SK-N-SH (cell line): ENCODE measurements at regions of chr17 and their contacts with region 1.

Region 1: GRCh38 chr17:81101614-81102306 is 63.5 kb upstream of the PVALEF start:
- DNase-seq: peak; percentile 100
- H3K4me3 ChIP-seq: peak overlapping the region in 1 of 2 experiments; percentile 24; a peak in 1 of 4 replicates
- H3K27ac ChIP-seq: no peak overlapping the region
- H3K4me1 ChIP-seq: peaks cover 11 to 13% of the 10 kb centered on the region in 2 experiments; a peak in 3 of 4 replicates
- H3K27me3 ChIP-seq: no peaks in the 10 kb centered on the region
- CTCF ChIP-seq: peak; percentile 100
- EP300 ChIP-seq: no peak
- RAD21 ChIP-seq: peak; percentile 97

Region 2: GRCh38 chr17:81002409-81003361 is 99.1 kb before region 1 on chr17:
- CTCF ChIA-PET with region 1: interaction called, 45 read pairs
- POLR2A ChIA-PET with region 1: no interaction called
- DNase-seq: peak; percentile 92
- H3K4me3 ChIP-seq: no peak overlapping the region
- H3K27ac ChIP-seq: no peak overlapping the region
- H3K4me1 ChIP-seq: peaks cover 5 to 14% of the 10 kb centered on the region in 2 experiments; a peak in 1 of 4 replicates
- H3K27me3 ChIP-seq: peaks cover 51% of the 10 kb centered on the region
- CTCF ChIP-seq: no peak
- EP300 ChIP-seq: 0 out of 4 replicates have a peak, but pooled peaks of 1 of the 2 experiments have one; percentile 13
- RAD21 ChIP-seq: no peak

Region 3: DNA sequence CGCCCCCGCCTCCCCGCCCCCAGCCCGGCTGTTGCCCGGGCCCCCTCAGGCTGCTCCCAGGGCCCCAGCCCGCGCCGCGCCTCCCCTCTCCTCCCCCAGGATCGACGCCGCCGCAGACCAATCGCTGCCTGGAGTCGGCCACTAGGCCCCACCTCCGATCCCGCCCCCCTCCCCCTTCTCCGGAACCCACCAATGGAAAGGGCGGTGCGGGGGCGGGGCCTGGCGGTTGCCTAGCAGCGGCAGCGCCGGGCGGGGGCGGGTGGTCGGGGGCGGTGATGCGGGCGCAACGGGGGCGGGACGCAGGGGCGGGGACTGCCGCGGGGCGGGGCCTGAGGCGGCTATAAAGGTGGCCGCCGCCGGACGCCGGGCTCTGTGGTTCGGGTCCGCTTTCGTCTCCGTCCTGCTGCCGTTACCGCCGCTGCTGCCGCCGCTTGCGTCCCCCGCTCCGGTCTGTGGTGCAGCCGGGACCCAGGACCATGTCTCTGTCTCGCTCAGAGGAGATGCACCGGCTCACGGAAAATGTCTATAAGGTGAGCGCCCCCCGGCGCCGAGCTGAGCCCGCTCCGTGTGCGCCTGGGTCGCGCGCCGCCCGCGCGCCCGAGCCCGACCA is 66.9 kb before region 1 on chr17 and contains the start of gene BAIAP2:
- CTCF ChIA-PET with region 1: interaction called, 668 read pairs
- POLR2A ChIA-PET with region 1: no interaction called
- DNase-seq: peak; percentile 100
- H3K4me3 ChIP-seq: peak within 1 kb of the TSS; percentile 83 to 94
- H3K27ac ChIP-seq: peak within 1 kb of the TSS in 1 of 2 experiments; percentile 75; a peak in 1 of 4 replicates
- H3K4me1 ChIP-seq: peaks cover 4 to 51% of the 10 kb centered on the region in 2 experiments; a peak in 3 of 4 replicates
- H3K27me3 ChIP-seq: no peaks in the 10 kb centered on the region
- CTCF ChIP-seq: peak; percentile 38; the same call in 1 of the 2 replicates
- EP300 ChIP-seq: no peak
- RAD21 ChIP-seq: peak; percentile 21; the same call in 1 of the 2 replicates
- polyA plus RNA-seq, gene BAIAP2: 15.5 and 19.8 TPM in 2 replicates

Region 4: DNA sequence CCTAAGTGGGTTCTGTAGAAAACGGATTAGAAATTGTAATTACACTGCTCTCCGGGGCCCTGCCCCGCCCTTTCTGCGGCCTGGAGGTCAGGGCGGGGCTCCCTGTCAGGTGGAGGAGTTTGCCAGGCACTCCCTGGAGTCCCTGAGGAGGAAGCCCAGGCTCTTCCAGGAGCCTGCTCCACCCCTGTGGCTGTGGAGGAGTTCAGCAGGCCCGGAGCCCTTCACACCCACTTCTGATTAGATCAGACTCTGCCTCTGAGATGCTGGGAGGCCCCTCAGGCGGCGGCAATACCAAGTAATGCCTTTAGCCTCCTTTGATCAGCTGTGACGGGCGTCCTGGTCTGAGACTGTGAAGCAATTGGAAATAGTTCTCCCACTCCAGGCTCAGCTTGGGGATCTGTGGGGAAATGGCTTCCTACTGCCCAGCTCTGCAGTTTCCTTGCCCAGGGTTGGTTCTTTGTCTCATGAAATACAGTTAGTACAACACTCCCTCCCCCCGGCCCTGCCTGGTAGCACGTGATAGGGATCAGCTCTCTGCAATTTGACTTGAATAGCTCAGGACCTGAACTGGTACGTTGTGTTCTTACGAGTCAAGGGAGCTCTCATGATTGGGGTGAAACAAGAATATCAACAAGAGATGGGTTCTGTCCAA is 44.6 kb before region 1 on chr17:
- CTCF ChIA-PET with region 1: interaction called, 22 read pairs
- POLR2A ChIA-PET with region 1: no interaction called
- DNase-seq: peak; percentile 84
- H3K4me3 ChIP-seq: no peak overlapping the region
- H3K27ac ChIP-seq: peak overlapping the region in 1 of 2 experiments; percentile 45; a peak in 2 of 4 replicates
- H3K4me1 ChIP-seq: peaks cover 9 to 24% of the 10 kb centered on the region in 2 experiments; a peak in 1 of 4 replicates
- H3K27me3 ChIP-seq: no peaks in the 10 kb centered on the region
- CTCF ChIP-seq: no peak
- EP300 ChIP-seq: no peak
- RAD21 ChIP-seq: peak; percentile 35; the same call in 1 of the 2 replicates

Region 5: DNA sequence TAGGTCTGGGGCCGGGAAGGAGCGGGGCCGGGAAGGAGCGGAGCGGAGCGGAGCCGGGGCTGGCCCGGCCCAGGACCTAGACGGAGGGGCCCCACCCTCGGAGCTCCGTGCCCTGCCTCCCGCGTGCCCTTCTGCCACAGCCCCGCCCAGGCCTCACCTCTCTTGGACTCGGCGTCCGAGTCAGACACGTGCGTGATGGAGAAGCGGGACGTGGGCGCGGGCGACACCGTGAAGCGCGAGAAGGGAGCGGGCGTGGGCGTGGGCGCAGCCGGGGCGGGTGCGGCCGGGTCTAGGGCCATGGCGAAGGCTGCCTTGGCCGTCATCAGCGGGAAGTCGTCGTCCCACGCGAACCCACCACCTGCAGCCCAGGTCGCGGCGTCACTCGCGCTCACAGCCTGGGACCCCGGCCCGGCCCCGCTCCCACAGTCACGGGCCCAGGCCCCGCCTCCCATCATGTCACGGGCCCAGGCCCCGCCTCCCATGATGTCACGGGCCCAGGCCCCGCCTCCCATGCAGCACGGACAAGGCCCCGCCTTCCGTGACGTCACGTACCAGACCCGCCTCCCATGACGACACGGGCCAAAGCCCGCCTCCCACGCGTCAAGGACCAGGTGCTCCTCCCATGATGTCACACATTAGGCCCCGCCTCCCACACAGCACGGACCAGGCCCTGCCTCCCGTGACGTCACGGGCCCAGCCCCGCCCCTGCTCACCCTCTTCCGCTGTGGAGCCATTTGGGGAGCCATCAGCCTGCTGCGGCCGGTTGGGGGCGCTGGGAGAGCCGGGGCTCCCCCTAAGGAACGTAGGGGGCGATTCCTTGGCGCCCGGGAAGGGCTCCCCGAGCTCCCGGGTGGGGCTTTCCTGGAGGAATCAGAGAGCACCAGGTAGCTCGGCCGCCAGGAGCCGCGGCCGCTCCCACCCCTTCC is 17.7 kb after region 1 on chr17:
- CTCF ChIA-PET with region 1: interaction called, 177 read pairs
- POLR2A ChIA-PET with region 1: interaction called, 5 read pairs
- DNase-seq: peak; percentile 96
- H3K4me3 ChIP-seq: no peak overlapping the region
- H3K27ac ChIP-seq: no peak overlapping the region
- H3K4me1 ChIP-seq: peaks cover 0 to 29% of the 10 kb centered on the region in 2 experiments; a peak in 1 of 4 replicates
- H3K27me3 ChIP-seq: no peaks in the 10 kb centered on the region
- CTCF ChIP-seq: no peak
- EP300 ChIP-seq: no peak
- RAD21 ChIP-seq: no peak